ENCODE measurements at regions of chr2 and their contacts with region 1.

Region 1: DNA sequence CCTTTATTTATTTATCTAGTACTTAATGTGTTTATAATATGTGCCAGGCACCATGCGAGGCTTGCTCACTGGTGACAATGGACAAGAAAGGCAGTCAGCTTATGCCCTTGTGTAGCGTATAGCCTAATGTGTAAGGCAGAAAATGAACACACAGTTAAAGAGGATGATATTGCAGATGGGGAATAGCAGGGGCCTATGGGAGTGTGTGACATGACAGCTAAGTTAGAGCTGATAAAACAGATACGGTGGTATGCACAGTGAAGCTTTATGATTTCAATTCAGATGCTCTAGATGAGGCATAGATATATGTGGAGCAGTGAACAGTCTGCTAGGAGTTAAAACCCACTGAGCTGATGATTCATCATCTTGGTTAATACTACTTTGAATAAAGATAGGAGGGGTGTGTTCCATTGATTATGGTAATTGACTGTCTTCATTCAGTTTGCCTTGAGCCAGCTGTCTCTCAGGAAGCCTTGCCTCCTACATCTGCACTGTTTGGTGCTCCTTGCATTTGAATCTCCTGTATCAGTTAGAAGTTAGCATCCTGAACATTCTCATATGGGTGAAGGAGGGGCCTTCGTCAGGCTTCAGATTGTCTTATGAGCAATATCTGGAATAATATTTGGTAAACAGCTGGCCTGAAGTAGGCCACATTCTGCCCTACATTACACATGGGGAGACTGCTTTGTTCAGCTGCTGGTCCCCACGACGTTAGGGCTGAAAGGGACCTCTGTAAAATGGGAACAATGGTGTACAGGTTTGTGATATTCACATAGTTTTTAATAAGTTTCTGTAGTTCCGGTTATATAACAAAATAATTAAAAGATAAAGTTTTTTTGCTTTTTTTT is 13.2 kb downstream of the MAP4K4 start:
- DNase-seq: peak in 1 of 4 experiments; percentile 13
- ATAC-seq: peak; percentile 68
- H3K4me3 ChIP-seq: no peak overlapping the region
- H3K27ac ChIP-seq: no peak overlapping the region
- H3K4me1 ChIP-seq: peaks cover 0 to 18% of the 10 kb centered on the region in 2 experiments; a peak in 2 of 5 replicates
- H3K27me3 ChIP-seq: no peaks in the 10 kb centered on the region
- CTCF ChIP-seq: no peak
- EP300 ChIP-seq: no peak
- POLR2A ChIP-seq: no peak
- RAD21 ChIP-seq: no peak

Region 2: DNA sequence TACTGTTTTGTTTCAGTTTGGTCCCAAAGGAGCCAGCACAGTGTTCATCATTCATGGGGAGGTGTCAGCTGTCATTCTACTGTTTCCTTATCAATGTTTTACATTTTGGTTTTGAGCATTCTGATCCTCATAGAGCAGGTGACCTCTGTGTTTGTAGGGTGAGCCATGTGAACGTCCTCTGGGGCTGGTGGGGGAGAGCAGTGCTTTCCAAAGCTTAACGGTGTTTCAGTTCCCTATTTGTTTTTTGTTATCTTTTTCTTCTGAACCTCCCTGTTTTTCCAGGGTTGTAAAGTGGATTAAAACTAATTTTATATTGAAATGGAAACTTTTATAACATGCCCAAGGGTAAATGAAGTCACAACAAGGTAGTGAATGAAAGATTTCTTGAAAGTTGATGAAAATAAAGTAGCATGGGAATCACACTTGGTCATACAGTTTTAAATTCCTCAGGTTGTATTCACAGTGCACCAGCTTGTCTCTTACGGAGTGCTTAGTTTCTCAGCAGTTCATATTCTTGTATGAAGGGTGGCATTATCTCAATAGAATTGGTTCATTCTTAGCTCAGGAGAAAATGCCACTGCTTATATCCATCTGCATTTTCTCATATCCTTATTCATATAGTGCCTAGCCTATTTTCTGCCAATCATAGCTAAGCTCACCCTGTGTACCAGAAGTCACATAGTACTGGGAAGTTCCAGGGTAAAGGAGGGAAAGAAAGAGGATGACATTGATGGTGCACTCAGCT is 41.4 kb after region 1 on chr2:
- CTCF ChIA-PET with region 1: no interaction called
- POLR2A ChIA-PET with region 1: interaction called, 3 read pairs
- in situ Hi-C with region 1: no loop called
- intact Hi-C with region 1: loop called (anchors 5 kb)
- DNase-seq: peak in 2 of 4 experiments; percentile 22 to 35
- ATAC-seq: peak; percentile 65
- H3K4me3 ChIP-seq: no peak overlapping the region
- H3K27ac ChIP-seq: no peak overlapping the region
- H3K4me1 ChIP-seq: peaks cover 4 to 20% of the 10 kb centered on the region in 2 experiments; a peak in 4 of 5 replicates
- H3K27me3 ChIP-seq: no peaks in the 10 kb centered on the region
- CTCF ChIP-seq: no peak
- EP300 ChIP-seq: no peak
- POLR2A ChIP-seq: no peak
- RAD21 ChIP-seq: no peak

Measured in K562 (cell line).